Activated CD4-positive, alpha-beta memory T cell treated with anti-CD3 and anti-CD28 coated beads, Interleukin-2, amount 10 ng/mL, durations not matched to agents 7 days and 5 days (primary cell): ENCODE measurements at regions of chr14 and their contacts with region 1.

Region 1: DNA sequence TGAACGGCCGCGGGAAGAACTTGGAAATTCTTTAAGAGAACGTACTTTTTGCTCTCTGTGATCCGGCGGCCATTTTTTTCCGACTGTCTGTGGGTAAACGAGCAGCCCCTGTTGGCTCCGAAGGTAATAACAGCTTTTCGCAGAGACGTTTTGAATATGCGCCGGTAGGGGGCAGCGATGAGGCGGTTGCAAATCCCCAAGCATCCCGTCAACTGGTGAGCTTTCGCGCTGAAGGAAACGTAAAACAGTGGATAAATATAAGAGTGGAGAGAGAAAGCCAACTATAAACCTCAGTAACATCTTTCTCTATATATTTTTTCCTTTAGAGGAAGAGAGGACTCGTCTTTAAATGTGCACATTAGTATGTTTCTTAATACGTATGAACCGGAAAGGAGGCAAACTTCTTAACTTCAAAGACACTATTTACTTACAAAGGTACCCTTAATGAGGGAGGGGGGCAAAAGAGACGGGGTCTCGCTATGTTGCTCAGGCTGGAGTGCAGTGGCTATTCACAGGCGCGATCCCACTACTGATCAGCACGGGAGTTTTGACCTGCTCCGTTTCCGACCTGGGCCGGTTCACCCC is 9.6 kb upstream of the NEMF start:
- DNase-seq: peak; percentile 91
- H3K4me3 Mint-ChIP-seq: no peak overlapping the region
- H3K27ac Mint-ChIP-seq: no peak overlapping the region
- H3K4me1 Mint-ChIP-seq: peaks cover 29% of the 10 kb centered on the region
- H3K27me3 Mint-ChIP-seq: no peaks in the 10 kb centered on the region

Region 2: DNA sequence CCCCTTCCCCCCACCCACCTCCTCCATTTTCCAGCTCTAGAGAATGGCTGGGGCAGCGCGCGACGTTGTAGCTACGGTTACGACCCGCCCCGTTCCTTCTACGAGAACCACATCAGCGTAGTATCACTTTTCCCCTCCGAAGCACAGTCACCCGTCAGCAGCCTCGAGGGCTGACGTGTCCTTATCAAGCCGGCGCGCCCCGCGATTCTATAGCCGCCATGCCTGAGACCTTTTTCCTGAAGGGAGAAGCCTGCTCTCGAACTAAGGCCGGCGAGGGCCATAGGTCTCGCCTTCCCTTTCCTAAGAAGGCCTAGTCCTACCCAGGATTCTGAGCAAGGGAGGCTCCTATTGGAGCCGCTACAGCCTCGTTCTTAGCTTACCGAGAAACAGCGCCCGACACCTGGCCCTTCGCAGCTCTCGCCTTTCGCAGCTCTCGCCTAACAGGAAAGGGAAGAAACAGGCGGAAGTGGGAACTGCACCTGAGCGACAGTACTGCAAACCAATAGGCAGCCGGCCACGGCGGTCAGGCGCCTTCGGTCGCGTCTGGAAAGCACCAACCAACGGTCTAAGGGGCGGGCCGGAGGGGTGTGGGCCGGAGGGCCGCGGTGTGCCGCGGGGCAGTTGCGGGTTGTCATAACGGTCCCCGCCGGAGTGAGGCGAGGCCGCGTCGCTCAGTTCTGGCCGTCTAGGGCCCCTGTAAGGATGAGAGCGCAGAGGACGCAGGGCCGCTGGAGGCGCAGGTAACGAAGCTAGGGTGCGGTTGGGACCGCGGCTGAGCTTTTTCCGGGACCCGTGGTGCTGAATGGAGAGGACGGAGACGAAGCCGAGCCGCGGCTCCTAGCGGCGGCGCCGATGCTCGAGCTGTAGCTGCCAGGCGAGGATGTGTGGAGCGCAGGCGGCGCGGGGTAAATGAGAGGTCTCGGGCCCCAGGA is 241.7 kb before region 1 on chr14 and contains the starts of genes MGAT2 and RPL36AL:
- CTCF ChIA-PET with region 1: interaction called, 19 read pairs
- POLR2A ChIA-PET with region 1: interaction called, 28 read pairs
- DNase-seq: peak; percentile 96
- H3K4me3 Mint-ChIP-seq: peak within 1 kb of the TSS; percentile 94
- H3K27ac Mint-ChIP-seq: peak within 1 kb of the TSS; percentile 94
- H3K4me1 Mint-ChIP-seq: peaks cover 50% of the 10 kb centered on the region
- H3K27me3 Mint-ChIP-seq: no peaks in the 10 kb centered on the region
- total RNA-seq, gene MGAT2: 82.7 to 86.5 TPM
- total RNA-seq, gene RPL36AL: 320 to 330 TPM

Region 3: GRCh38 chr14:49879683-49880204 is 17.6 kb after region 1 on chr14:
- CTCF ChIA-PET with region 1: interaction called, 53 read pairs
- POLR2A ChIA-PET with region 1: interaction called, 17 read pairs
- DNase-seq: peak; percentile 76
- H3K4me3 Mint-ChIP-seq: no peak overlapping the region
- H3K27ac Mint-ChIP-seq: peak overlapping the region; percentile 50
- H3K4me1 Mint-ChIP-seq: peaks cover 48% of the 10 kb centered on the region
- H3K27me3 Mint-ChIP-seq: no peaks in the 10 kb centered on the region

Region 4: DNA sequence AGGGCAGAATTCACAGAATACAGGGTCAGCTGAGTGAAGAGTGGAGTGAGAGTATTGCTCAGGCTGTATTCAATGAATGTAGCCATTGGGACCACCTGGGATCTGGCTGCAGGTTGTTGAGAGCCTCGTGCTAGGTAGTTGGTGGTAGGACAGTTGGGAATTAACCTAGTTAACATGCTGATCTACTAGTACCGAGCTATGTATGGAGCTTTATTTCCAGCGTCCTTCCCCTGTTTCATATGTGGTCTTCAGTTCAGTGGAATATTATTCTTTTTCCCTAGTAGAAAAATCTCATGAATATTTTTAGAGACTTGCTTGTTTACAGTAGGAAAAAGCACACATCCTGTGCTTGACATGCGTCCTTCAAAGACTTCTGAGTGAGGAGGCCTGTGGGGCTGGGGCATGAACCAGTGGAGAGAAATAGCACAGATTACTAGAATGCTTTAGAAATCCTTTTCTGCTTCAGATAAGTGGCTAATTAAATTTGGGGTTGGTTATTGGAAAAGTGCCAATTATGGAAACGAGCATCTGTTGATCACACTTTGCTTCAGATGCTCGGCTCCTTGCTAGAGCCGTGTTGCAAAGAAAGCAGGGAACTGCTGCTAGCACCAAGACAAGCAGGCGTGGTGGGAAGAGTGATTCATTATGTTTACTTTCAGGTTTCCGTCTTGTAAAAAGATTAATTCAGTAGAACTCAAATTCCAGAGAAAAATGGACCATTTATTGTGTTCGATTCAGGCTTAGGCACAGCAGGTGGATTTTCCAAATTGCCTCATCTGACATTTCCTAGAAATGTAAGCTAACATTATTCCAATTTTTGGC is 84.3 kb after region 1 on chr14:
- CTCF ChIA-PET with region 1: interaction called, 6 read pairs
- POLR2A ChIA-PET with region 1: interaction called, 15 read pairs
- DNase-seq: peak; percentile 35
- H3K4me3 Mint-ChIP-seq: peak overlapping the region; percentile 41
- H3K27ac Mint-ChIP-seq: peak overlapping the region; percentile 87
- H3K4me1 Mint-ChIP-seq: peaks cover 77% of the 10 kb centered on the region
- H3K27me3 Mint-ChIP-seq: no peaks in the 10 kb centered on the region

Region 5: DNA sequence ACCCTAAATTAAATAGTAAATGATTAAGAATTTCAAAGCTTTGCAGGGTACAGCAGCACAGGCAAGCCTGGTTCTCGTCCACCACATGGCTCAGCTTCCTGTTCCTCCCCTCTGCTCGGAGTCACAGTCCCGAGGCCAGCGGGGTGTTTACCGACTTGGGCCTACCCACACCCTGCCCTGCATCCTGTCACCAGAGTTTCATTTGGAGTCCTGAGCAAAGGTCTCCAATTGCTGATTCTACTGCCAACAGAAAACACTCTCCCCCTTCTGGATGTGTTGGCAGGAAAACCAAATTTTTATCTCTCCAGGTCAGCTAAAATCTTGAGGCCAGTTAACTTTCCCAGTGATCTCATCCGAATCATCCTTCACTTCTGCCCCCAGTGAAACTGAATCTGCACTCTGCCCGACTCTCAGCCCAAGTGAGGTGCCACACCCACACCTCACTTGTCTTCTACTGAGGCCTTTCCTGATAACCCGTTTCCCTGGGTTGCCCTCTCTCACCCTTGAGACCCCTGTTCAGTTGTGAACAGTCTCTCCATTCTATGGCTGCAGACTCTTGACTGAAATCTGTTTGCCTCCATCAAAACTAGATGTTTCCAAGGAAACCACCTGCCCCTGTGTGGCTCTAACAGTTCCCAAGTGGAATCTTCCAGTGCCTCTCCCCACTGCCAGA is 183.0 kb after region 1 on chr14:
- CTCF ChIA-PET with region 1: interaction called, 24 read pairs
- POLR2A ChIA-PET with region 1: interaction called, 88 read pairs
- DNase-seq: peak; percentile 89
- H3K4me3 Mint-ChIP-seq: peak overlapping the region; percentile 6
- H3K27ac Mint-ChIP-seq: peak overlapping the region; percentile 92
- H3K4me1 Mint-ChIP-seq: peaks cover 70% of the 10 kb centered on the region
- H3K27me3 Mint-ChIP-seq: no peaks in the 10 kb centered on the region

Region 6: DNA sequence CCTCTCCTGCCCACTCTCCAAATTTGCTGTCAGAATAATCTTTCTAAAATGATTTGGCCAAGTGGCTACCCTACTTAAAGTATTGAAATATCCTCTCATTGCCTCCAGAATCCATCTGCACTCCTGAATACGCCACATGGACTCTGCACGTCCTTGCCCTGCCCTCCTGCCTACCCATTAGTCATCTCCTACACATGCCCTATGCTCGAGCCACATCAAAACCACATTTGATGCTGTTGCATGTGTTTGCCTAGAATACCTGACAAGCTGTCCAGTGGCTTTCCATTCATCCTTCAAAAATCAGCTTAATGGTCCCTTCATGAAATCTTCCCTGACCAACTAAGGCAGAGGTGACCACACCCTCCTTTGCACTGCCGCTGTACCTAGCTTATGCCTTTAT is 237.2 kb after region 1 on chr14:
- CTCF ChIA-PET with region 1: interaction called, 31 read pairs
- POLR2A ChIA-PET with region 1: interaction called, 30 read pairs
- DNase-seq: no peak
- H3K4me3 Mint-ChIP-seq: no peak overlapping the region
- H3K27ac Mint-ChIP-seq: no peak overlapping the region
- H3K4me1 Mint-ChIP-seq: peaks cover 46% of the 10 kb centered on the region
- H3K27me3 Mint-ChIP-seq: peaks cover 8% of the 10 kb centered on the region

Region 7: GRCh38 chr14:50311975-50312733 is 450.0 kb after region 1 on chr14 and contains the starts of genes DMAC2L and L2HGDH:
- CTCF ChIA-PET with region 1: interaction called, 10 read pairs
- POLR2A ChIA-PET with region 1: interaction called, 14 read pairs
- DNase-seq: peak; percentile 91
- H3K4me3 Mint-ChIP-seq: peak within 1 kb of the TSS; percentile 95
- H3K27ac Mint-ChIP-seq: peak within 1 kb of the TSS; percentile 84
- H3K4me1 Mint-ChIP-seq: peaks cover 35% of the 10 kb centered on the region
- H3K27me3 Mint-ChIP-seq: no peaks in the 10 kb centered on the region
- total RNA-seq, gene DMAC2L: 12.2 to 12.6 TPM
- total RNA-seq, gene L2HGDH: 9.7 to 10.0 TPM